ENCODE measurements at regions of chr2 and their contacts with region 1.

Region 1: DNA sequence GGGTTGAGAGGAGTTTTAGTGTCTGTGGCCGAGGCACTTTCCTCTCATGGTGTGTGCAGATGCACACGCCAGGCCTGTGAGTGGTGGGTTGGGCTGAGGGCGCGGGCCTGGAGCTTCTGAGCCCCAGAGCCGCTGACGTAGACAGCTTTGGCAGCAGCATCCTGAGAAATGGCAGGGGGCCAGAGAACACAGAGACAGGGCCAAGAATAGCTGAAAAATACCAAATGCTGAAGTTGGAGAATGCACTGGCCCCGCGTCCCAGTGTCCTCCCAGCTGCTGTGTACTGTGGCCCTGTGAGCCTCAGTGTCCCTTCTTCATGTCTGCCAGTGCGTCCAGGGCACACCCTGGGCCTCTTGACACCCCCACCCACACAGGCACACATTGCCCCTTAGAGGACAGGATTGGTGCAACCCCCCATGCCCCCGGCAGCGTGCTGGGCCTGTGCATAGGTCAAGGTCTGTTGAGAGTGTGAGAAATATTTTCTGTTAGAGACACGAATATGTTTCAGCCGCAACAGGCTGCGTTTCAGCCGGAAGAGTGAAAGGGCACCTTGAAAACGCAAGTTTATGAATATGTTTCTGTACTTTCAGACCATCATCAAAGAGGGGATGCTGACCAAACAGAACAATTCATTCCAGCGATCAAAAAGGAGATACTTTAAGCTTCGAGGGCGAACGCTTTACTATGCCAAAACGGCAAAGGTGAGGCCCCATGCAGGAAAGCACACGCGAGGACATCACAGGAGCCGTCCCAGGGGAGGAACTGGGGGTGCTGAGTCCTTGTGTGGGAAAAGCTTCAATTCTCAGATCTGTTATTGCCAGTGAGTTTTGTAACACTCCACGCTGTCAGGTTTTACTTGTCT is 33.6 kb downstream of the DGKD start:
- DNase-seq: peak; percentile 92

Region 2: DNA sequence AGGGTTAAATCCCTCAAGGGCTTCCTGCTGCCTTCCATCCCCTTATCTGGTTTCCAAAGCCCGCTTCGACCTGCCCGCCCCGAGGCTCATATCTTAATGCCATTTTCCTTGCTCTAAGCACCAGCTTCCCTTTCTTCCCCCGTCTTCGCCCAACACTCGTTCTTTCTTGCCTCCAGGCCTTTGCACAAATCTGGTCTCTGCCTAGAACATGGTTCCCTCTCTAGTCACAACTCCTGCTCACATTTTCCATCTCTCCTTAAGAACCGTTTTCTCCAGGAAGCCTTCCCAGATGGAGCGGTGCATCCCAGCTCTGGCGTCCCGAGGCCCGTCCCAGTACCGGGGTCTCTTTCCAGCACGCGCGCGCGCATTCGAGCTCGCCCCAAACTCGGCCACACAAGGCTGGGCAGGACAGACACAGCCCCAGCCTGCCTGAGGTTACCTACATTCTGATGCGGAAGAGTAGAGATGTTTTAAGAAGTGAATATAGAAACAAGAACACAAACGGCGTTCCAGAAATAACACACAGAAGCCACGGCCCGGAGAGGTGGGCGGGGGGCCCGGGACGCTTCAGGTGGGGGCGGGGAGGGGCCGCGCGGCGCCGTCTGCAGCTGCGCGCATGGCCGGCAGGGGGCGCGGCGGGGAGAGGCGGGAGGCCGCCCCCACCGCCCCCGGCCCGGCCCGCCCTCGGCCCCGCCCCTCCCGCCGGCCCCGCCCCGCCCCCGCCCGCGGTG is 34.0 kb before region 1 on chr2 and contains the start of gene DGKD:
- intact Hi-C with region 1: loop called (anchors 2 kb)
- DNase-seq: peak; percentile 83
- total RNA-seq, gene DGKD: 100 TPM

Region 3: DNA sequence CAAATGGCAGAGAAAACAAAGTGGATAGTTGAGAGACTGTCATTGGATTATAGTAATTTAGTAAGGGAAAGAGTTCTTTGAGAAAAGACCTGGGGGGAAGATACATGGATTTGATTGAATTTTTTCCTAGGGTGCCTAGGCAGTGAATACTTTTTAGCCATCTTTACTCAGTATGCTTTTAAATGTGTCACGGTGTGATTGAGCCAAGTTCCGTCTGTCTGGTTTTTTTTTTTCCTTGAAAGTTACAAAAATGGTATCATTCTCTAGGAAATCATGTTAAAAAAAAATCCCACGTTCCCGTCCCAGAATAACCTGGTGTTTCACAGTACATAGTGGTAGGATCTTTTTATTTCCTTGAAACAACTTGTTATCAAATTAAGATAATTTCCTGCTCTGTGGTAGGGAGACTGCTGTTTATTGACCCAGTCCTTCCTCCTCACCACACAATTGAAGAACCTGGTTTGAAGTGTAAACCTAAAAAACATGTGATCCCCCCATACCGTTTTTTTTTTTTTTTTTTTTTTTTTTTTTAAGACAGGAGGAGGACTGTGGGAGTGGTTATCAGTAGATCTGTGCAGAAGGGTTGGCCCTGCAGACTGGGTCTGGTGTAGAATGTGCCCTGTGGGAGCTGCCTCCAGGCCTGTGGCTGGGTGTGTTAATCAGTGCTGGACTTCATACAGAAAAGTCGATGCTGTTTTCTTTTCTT is 21.5 kb after region 1 on chr2:
- intact Hi-C with region 1: loop called (anchors 2 kb)
- DNase-seq: no peak

Region 4: GRCh38 chr2:234060236-234060635 is 672.3 kb after region 1 on chr2:
- intact Hi-C with region 1: no loop called
- DNase-seq: no peak